Heart left ventricle (tissue), 16 donors: ENCODE measurements at regions of chr6 and their contacts with region 1.

Region 1: DNA sequence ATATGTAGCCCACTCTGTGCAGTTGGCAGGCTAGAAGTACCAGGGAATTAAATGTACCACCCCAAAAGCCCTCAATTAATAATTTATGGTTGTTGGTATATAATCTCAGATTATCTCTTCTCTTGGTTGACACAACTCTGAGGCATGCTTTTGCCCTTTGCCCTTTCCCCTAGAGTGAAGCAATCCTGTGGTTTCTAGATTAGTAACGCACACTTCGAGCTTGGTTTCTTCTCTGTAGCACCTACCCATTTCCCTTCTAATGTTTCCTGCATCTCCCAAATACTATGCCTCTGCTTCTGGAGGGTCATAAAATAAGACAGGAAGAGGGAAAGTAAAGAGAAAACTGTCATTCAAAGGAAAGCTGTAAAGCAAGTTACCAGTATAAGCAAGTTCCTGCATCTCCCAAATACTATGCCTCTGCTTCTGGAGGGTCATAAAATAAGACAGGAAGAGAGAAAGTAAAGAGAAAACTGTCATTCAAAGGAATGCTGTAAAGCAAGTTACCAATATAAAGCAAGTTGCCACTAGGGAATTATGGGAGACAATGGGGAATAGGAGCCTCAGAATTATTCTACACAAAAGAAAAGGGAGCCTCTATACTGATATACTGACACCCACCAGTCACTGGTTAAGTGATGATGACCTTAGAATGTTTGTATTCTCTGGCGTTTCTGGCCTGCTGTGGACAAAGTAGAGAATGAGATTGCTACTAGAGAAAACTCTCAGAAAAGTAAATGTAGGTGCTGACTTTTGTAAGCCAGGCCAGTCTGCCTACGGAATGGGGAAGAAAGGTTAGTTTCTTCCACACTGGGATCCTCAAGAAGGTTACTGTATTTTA is 862.6 kb upstream of the MAN1A1 start:
- DNase-seq: no peak
- ATAC-seq: no peak
- H3K4me3 ChIP-seq: no peak overlapping the region
- H3K27ac ChIP-seq: no peak overlapping the region
- H3K4me1 ChIP-seq: no peaks in the 10 kb centered on the region
- H3K27me3 ChIP-seq: no peaks in the 10 kb centered on the region
- CTCF ChIP-seq: no peak
- POLR2A ChIP-seq: no peak

Region 2: DNA sequence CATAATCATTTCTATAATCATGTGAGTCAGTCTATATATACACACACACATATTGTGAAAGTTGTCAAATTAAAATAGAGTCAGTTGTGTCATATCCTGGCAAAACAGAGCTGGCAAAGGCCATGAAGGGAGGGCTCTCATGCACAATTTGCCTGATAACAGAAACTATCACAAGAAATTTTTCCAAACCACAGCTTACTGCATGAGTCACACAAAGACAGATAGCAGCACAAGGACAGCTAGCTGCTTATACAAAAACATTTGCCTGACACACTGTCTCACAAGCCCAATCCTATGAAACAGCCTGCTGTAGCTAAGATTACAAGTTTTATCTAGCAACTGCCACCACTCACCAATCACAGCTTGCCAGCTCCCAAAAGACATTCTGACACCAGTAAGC is 14.1 kb before region 1 on chr6:
- intact Hi-C with region 1: loop called in 1 of 10 experiments (anchors 2 kb)
- DNase-seq: no peak
- ATAC-seq: peak in 3 of 4 donors; percentile 24 to 91 (median 47)
- H3K4me3 ChIP-seq: no peak overlapping the region
- H3K27ac ChIP-seq: no peak overlapping the region
- H3K4me1 ChIP-seq: no peaks in the 10 kb centered on the region
- H3K27me3 ChIP-seq: no peaks in the 10 kb centered on the region
- CTCF ChIP-seq: no peak
- POLR2A ChIP-seq: no peak